ENCODE measurements at regions of chr19 and their contacts with region 1.

Region 1: GRCh38 chr19:41872775-41873647 is 4.1 kb upstream of the CD79A start:
- DNase-seq: peak; percentile 72
- H3K4me3 ChIP-seq: no peak overlapping the region; a peak in 1 of 4 replicates
- H3K27ac ChIP-seq: peak overlapping the region in 1 of 2 experiments; percentile 0; a peak in 1 of 4 replicates
- H3K4me1 ChIP-seq: no peaks in the 10 kb centered on the region; a peak in 1 of 4 replicates
- H3K27me3 ChIP-seq: no peaks in the 10 kb centered on the region
- CTCF ChIP-seq: peak; percentile 68
- EP300 ChIP-seq: no peak
- RAD21 ChIP-seq: peak; percentile 79

Region 2: GRCh38 chr19:41859618-41860418 is 13.2 kb before region 1 on chr19 and contains the start of gene RPS19:
- CTCF ChIA-PET with region 1: interaction called, 34 read pairs
- POLR2A ChIA-PET with region 1: interaction called, 14 read pairs
- DNase-seq: peak; percentile 98
- H3K4me3 ChIP-seq: peak within 1 kb of the TSS; percentile 83 to 93
- H3K27ac ChIP-seq: peak within 1 kb of the TSS; percentile 97 to 99
- H3K4me1 ChIP-seq: peaks cover 34 to 39% of the 10 kb centered on the region in 2 experiments
- H3K27me3 ChIP-seq: peaks cover 12% of the 10 kb centered on the region; the same call in 1 of the 2 replicates
- CTCF ChIP-seq: peak; percentile 52
- EP300 ChIP-seq: no peak
- RAD21 ChIP-seq: no peak
- polyA plus RNA-seq, gene RPS19: 2,819 and 3,310 TPM in 2 replicates

Region 3: DNA sequence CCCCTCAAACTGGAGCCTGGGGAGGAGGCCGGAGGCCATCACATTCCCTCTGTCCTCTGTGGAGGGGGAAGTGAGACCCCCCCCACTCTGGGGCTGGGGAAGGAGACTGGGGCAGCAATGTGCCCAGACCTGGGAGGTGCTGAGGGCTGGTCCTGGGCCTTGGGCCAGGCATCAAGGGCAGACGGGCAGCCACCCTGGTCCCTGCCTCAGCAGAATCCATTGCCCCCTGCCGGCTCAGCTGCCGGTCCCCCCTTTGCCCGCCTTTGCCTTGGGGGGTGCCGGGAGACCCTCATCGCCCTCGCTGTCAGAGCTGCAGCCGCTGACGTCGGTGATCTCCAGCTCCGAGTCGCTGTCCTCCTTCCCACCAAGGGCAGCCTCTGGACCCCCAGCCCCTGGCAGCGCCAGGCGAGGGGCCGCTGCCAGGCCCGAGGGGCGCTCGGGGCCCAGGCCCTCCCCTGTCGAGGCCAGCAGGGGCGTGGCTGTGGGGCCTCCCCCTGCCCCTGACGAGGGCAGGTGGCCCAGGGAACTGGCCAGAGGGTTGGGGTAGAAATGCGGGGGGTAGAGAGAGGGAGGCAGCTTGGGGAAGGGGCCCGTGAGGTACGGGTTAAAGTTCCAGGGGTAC is 35.1 kb after region 1 on chr19:
- CTCF ChIA-PET with region 1: interaction called, 10 read pairs
- POLR2A ChIA-PET with region 1: no interaction called
- DNase-seq: no peak
- H3K4me3 ChIP-seq: no peak overlapping the region
- H3K27ac ChIP-seq: no peak overlapping the region
- H3K4me1 ChIP-seq: peaks cover 0 to 13% of the 10 kb centered on the region in 2 experiments; a peak in 1 of 4 replicates
- H3K27me3 ChIP-seq: peaks cover 12% of the 10 kb centered on the region
- CTCF ChIP-seq: no peak
- EP300 ChIP-seq: no peak
- RAD21 ChIP-seq: no peak

Region 4: GRCh38 chr19:41939861-41940730 is 67.1 kb after region 1 on chr19:
- CTCF ChIA-PET with region 1: interaction called, 17 read pairs
- POLR2A ChIA-PET with region 1: no interaction called
- DNase-seq: peak; percentile 87
- H3K4me3 ChIP-seq: peak overlapping the region; percentile 35 to 42; a peak in 3 of 4 replicates
- H3K27ac ChIP-seq: peak overlapping the region in 1 of 2 experiments; percentile 47; a peak in 1 of 4 replicates
- H3K4me1 ChIP-seq: no peaks in the 10 kb centered on the region; a peak in 1 of 4 replicates
- H3K27me3 ChIP-seq: no peaks in the 10 kb centered on the region
- CTCF ChIP-seq: no peak
- EP300 ChIP-seq: no peak
- RAD21 ChIP-seq: no peak

Region 5: GRCh38 chr19:41951686-41952172 is 78.7 kb after region 1 on chr19:
- CTCF ChIA-PET with region 1: interaction called, 48 read pairs
- POLR2A ChIA-PET with region 1: interaction called, 3 read pairs
- DNase-seq: peak; percentile 90
- H3K4me3 ChIP-seq: no peak overlapping the region; a peak in 1 of 4 replicates
- H3K27ac ChIP-seq: no peak overlapping the region
- H3K4me1 ChIP-seq: peaks cover 0 to 2% of the 10 kb centered on the region in 2 experiments; a peak in 1 of 4 replicates
- H3K27me3 ChIP-seq: no peaks in the 10 kb centered on the region
- CTCF ChIP-seq: peak; percentile 94
- EP300 ChIP-seq: no peak
- RAD21 ChIP-seq: peak; percentile 82

Region 6: GRCh38 chr19:41998246-41999020 is 125.4 kb after region 1 on chr19:
- CTCF ChIA-PET with region 1: no interaction called
- POLR2A ChIA-PET with region 1: no interaction called
- DNase-seq: peak; percentile 89
- H3K4me3 ChIP-seq: peak overlapping the region; percentile 34 to 53; a peak in 3 of 4 replicates
- H3K27ac ChIP-seq: peak overlapping the region in 1 of 2 experiments; percentile 98; a peak in 2 of 4 replicates
- H3K4me1 ChIP-seq: peaks cover 0 to 50% of the 10 kb centered on the region in 2 experiments; a peak in 1 of 4 replicates
- H3K27me3 ChIP-seq: peaks cover 54% of the 10 kb centered on the region
- CTCF ChIP-seq: peak; percentile 60
- EP300 ChIP-seq: no peak
- RAD21 ChIP-seq: peak; percentile 54

Region 7: DNA sequence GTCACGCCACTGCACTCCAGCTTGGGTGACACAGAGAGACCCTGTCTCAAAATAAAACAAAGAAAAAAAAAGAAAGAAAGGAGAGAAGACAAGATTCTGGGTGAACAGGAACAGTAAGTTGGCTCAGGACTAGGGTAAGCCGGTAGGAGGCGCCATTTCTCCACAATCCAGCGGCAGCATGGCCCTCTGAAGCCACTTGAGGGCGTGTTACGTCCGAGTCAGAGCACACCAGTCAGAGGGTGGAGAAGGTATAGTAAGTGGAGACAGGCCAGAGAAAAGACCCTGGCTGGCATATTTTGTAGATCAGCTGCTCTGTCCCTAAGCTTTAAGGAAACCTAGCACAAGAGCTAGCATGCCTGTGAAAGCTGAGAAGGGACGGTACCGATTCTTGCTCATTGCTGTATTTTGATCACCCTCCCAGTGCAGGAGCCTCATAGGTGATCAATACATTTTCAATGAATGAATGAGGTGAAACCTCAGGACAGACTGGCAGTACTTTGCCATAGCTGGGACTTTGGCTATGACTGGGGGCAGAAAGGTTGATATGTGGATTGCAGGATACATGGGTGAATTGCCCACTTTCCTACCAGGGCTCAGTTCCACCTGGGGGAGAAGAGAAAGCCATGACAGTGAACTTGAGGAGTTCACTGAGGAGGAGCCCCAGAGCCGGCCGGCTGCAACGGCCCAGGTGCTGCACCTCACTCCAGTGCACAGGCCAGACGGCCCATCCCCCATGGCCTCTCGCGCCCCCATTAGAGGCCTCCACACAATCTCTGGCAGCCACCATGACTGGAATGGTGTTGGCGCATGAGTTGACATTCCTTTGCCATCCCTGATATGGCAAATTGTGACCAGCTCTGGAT is 235.7 kb after region 1 on chr19:
- CTCF ChIA-PET with region 1: no interaction called
- POLR2A ChIA-PET with region 1: no interaction called
- DNase-seq: peak; percentile 91
- H3K4me3 ChIP-seq: peak overlapping the region in 1 of 2 experiments; percentile 34; a peak in 1 of 4 replicates
- H3K27ac ChIP-seq: no peak overlapping the region
- H3K4me1 ChIP-seq: peaks cover 0 to 31% of the 10 kb centered on the region in 2 experiments; a peak in 3 of 4 replicates
- H3K27me3 ChIP-seq: no peaks in the 10 kb centered on the region
- CTCF ChIP-seq: peak; percentile 100
- EP300 ChIP-seq: no peak
- RAD21 ChIP-seq: peak; percentile 100

Measured in SK-N-SH (cell line).